AG04450 (cell line): ENCODE measurements at regions of chr7 and their contacts with region 1.

Region 1: DNA sequence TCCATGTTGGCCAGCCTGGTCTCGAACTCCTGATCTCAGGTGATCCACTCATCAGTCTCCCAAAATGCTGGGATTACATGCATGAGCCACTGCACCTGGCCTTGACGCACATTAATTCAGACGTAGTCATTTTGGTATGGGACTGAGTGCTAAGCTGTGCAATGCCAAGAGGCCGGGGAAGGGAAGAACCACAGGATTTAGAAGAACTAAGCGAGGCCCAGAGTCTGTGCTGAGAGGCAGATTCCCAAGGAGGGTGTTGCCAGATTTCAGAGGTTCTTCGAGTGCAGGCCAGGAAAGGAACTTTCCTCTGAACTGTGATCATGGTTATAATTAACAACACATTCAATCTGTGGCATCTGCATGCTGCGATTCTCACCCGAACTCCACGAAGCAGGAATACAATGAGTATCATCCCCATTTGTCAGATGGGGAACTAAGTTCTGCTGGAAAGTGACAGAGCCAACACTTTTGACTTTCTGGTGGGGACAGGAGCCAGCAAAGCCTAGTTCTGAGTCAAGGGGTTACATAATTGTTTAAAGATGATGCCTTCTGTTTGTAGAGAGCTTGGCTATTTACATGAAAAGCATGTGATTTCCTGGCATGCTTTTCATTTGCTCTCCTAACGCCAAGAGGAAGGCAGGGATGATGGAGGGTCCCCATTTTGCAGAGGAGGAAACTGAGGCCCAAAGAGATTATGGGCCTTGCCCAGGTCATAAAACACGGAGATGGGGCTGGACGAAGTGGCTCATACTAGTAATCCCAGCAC is 6.2 kb upstream of the ZAN start:
- DNase-seq: no peak
- H3K4me3 ChIP-seq: no peak overlapping the region
- H3K27ac ChIP-seq: peak overlapping the region; percentile 62
- H3K27me3 ChIP-seq: peaks cover 31% of the 10 kb centered on the region
- CTCF ChIP-seq: no peak

Region 2: DNA sequence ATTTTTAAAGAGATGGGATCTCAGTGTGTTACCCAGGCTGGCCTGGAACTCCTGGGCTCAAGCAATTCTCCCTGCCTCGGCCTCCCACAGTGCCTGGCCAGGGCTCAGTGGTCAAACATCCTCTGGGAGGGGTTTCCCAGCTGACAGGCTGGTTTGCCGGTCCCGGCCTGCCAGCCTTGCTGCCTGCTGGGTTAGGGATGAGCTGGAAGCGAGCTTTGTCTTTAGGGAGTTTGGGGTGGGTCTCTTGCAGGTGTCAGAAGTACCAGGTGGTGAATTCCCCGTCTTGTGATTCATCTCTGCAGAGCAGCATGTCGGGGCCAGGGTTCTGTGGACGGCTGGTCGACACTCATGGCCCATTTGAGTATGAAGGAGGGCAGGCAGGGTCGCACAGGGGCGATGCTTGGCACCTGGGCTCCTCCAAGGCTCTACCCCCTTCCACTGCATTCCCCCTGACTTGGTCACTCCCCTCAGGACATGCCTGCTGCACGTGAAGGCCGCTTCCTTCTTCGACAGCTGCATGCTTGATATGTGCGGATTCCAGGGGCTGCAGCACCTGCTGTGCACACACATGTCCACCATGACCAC is 36.5 kb after region 1 on chr7:
- CTCF ChIA-PET with region 1: no interaction called
- POLR2A ChIA-PET with region 1: interaction called, 10 read pairs
- DNase-seq: no peak
- H3K4me3 ChIP-seq: no peak overlapping the region
- H3K27ac ChIP-seq: no peak overlapping the region
- H3K27me3 ChIP-seq: peaks cover 38% of the 10 kb centered on the region
- CTCF ChIP-seq: no peak